Activated naive CD4-positive, alpha-beta T cell treated with anti-CD3 and anti-CD28 coated beads for 36 hours (primary cell): ENCODE measurements at regions of chr12 and their contacts with region 1.

Region 1: DNA sequence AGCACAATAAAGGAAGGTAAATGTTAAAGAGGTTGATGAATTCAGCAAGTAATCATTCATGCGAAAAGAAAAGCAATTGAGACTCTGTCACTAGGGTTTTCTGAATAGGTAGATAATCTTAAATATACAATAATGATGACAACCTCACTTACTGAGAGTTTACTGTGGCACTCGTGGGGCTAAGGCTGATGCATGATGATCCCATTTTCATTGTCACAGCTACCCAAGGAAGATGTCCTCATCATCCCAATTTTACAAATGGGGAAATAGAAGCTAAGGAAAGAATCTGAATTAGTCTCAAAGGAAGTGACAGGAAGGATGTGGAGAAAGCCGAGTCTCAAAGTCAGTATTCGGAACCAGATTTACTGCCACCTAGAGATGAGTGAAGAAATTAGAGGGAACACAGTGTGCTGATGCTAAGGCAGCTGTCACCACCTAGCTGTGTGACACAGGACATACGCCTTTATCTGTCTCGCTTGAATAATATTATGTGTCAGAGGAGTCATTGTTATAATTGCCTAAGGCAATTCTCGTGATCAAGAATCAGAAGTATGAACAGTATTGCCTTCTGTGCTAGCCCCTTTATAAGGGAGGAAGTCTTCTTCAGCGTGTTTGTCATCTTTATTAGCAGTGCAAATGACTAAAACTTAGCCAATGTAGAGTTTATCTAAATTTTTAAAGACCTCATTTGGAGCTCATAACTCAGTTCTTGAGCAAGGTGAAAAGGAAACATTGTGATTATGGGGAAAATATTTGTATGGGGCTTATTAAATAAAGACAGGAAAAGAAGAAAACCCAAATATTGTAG is 63.2 kb downstream of the ERGIC2 start:
- DNase-seq: peak; percentile 62
- H3K4me3 Mint-ChIP-seq: no peak overlapping the region
- H3K27ac Mint-ChIP-seq: no peak overlapping the region
- H3K4me1 Mint-ChIP-seq: peaks cover 6% of the 10 kb centered on the region
- H3K27me3 Mint-ChIP-seq: no peaks in the 10 kb centered on the region

Region 2: GRCh38 chr12:27733052-27733656 is 1584.6 kb before region 1 on chr12:
- CTCF ChIA-PET with region 1: no interaction called
- intact Hi-C with region 1: loop called (anchors 2 kb)
- DNase-seq: peak; percentile 60
- H3K4me3 Mint-ChIP-seq: no peak overlapping the region
- H3K27ac Mint-ChIP-seq: no peak overlapping the region
- H3K4me1 Mint-ChIP-seq: no peaks in the 10 kb centered on the region
- H3K27me3 Mint-ChIP-seq: no peaks in the 10 kb centered on the region

Region 3: DNA sequence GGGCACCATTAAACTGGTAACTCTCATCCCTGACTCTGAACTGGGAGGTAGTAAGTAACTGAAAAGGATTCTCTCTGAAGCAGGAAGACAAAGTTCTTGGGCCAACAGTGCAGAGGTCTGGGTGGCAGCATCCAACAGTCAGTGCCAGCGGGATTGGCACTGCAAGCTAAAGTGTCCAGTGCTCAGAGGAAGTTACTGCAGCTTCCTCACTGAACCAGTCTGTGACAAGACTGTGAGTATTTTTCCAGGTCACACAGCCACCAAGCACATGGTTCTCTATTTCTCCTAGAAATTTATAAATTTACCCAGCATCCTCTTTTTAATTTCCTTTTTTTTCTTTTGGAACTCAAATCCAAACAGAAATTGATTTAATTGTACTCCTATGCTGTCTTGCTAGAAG is 250.3 kb before region 1 on chr12:
- CTCF ChIA-PET with region 1: interaction called, 43 read pairs
- intact Hi-C with region 1: no loop called
- DNase-seq: no peak
- H3K4me3 Mint-ChIP-seq: no peak overlapping the region
- H3K27ac Mint-ChIP-seq: no peak overlapping the region
- H3K4me1 Mint-ChIP-seq: peaks cover 2% of the 10 kb centered on the region
- H3K27me3 Mint-ChIP-seq: peaks cover 22% of the 10 kb centered on the region

Region 4: GRCh38 chr12:29073628-29074239 is 244.0 kb before region 1 on chr12:
- CTCF ChIA-PET with region 1: interaction called, 43 read pairs
- intact Hi-C with region 1: loop called (anchors 1 kb)
- DNase-seq: peak; percentile 18
- H3K4me3 Mint-ChIP-seq: no peak overlapping the region
- H3K27ac Mint-ChIP-seq: no peak overlapping the region
- H3K4me1 Mint-ChIP-seq: no peaks in the 10 kb centered on the region
- H3K27me3 Mint-ChIP-seq: peaks cover 27% of the 10 kb centered on the region

Region 5: DNA sequence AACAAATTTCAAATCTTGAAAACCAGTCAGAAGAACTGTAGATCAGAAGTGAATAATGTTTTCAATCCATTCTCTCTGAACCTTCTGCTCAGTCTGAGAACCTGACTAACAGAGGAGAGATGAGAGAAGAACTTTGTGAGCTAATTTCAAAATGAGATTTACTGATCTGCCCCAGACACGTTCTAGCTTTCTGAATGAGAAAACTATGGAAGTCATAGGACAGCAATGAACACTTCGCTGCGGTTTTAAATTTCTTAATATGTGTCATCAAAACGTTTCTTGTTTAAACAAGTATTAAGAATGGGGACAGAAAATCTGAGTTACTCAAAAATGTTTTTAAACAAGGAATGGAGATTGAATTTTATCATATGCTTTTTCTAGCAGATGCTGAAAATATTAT is 235.2 kb before region 1 on chr12:
- CTCF ChIA-PET with region 1: interaction called, 86 read pairs
- intact Hi-C with region 1: no loop called
- DNase-seq: no peak
- H3K4me3 Mint-ChIP-seq: no peak overlapping the region
- H3K27ac Mint-ChIP-seq: no peak overlapping the region
- H3K4me1 Mint-ChIP-seq: peaks cover 7% of the 10 kb centered on the region
- H3K27me3 Mint-ChIP-seq: peaks cover 9% of the 10 kb centered on the region

Region 6: DNA sequence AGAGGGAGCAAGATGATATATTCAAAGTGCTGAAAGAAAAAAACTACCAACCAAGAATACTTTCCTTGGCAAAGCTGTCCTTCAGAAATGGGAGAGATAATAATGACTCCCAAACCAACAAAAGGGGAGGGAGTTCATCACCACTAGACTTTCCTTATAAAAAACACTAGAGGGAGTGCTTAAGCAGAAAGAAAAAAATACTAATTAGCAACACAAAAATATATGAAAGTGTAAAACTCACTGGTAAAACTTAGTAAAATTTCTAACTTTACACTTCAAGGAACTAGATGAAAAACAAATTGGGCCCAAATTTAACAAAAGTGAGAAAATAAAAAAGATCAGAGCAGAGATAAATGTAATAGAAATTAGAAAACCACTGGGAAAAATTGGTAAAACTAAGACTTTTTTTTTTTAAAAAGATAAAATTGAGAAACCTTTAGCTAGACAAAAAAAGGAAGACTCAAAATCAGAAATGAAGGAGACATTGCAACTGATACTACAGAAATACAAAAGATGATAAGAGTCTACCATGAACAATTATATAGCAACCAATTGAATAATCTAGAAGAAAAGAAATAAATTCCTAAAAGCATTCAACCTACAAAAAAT is 229.0 kb before region 1 on chr12:
- CTCF ChIA-PET with region 1: interaction called, 86 read pairs
- intact Hi-C with region 1: loop called (anchors 1 kb)
- DNase-seq: no peak
- H3K4me3 Mint-ChIP-seq: no peak overlapping the region
- H3K27ac Mint-ChIP-seq: no peak overlapping the region
- H3K4me1 Mint-ChIP-seq: no peaks in the 10 kb centered on the region
- H3K27me3 Mint-ChIP-seq: peaks cover 7% of the 10 kb centered on the region

Region 7: DNA sequence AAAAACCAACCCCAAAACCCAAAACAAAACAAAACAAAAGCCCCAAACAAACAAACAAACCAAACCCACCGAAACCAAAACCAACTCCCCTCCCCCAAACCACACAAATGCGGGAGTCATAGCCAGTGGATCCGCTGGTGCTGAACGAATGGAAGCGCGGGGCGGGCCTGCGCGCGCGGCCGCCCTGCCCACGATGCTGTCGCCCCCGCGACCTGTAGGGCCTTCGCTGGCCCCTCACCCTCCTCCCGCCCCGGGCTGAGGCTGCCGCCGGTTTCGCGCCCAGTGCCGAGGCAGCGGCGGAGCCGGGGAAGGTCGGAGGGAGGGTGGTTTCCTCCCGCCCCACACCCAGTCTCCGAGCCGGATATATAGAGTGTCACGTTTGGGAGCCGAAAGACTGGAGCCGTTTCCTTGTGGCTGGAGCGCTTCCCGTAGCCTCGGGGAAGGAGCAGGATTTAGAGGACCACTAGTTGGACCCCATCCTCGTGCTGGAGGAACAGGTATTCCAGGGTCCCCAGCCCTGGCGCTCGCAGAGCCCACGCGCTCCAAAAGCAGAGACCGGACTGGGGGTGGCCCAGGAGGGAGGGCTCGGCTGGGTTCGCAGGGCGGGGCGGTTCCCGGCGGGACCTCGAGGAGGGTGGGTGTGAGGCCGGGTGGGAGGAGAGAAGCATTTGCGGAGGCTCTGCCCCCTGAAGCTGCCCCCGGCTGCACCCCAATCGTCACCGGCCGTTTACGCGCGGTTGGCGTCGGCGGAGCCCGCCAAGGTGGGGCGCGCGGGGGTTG is 168.7 kb before region 1 on chr12 and contains the start of gene FAR2:
- CTCF ChIA-PET with region 1: interaction called, 3 read pairs
- intact Hi-C with region 1: loop called (anchors 5 kb)
- DNase-seq: peak; percentile 60
- H3K4me3 Mint-ChIP-seq: peak within 1 kb of the TSS; percentile 87
- H3K27ac Mint-ChIP-seq: peak within 1 kb of the TSS; percentile 59
- H3K4me1 Mint-ChIP-seq: peaks cover 8% of the 10 kb centered on the region
- H3K27me3 Mint-ChIP-seq: peaks cover 13% of the 10 kb centered on the region
- total RNA-seq, gene FAR2: 2.2 to 4.4 TPM

Region 8: GRCh38 chr12:29365091-29365490 is 47.3 kb after region 1 on chr12:
- CTCF ChIA-PET with region 1: no interaction called
- intact Hi-C with region 1: no loop called
- DNase-seq: no peak
- H3K4me3 Mint-ChIP-seq: no peak overlapping the region
- H3K27ac Mint-ChIP-seq: no peak overlapping the region
- H3K4me1 Mint-ChIP-seq: peaks cover 12% of the 10 kb centered on the region
- H3K27me3 Mint-ChIP-seq: no peaks in the 10 kb centered on the region